ENCODE measurements at regions of chr5 and their contacts with region 1.

Region 1: GRCh38 chr5:159444441-159445082 is 114.3 kb upstream of the IL12B start:
- DNase-seq: peak; percentile 66
- H3K4me3 ChIP-seq: no peak overlapping the region
- H3K27ac ChIP-seq: no peak overlapping the region
- H3K4me1 ChIP-seq: no peaks in the 10 kb centered on the region
- H3K27me3 ChIP-seq: no peaks in the 10 kb centered on the region

Region 2: DNA sequence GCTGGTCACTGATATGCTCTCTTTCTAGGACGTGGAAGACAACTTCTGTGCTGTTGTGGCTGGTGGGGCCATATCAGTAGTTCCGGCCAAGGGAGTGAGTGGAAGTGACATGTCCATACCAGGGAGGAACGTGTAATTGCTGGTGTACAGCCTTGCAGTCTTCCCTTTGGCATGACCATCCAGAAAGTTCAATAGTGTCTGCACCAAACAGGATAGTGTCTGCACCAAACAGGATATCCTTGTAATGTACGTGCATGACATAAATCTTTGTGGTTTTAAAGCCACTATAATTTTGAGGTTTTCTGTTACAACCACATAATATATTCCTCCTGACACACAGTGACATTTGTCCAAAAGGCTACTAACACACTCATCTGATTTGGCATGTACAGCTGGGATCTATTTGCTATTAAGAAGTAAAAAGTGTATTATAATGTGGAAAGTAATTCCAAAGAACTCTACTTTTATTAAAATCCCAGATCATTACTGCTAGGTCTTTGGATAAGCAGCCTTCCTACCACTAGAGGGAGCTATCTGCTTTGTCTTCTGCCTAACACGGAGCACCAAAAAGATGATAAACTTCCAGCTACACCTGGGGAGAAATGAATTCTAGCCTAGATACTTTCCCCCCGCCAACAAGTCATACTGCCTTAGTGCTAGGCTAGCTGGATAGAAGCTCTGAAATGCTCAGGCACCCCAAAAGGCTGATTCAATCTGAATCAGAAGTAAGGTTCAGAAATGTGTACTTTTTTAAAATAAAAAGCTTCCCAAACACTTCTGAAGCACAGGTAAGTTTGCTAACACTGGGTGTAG is 287.9 kb before region 1 on chr5:
- in situ Hi-C with region 1: loop called (anchors 25 kb)
- DNase-seq: peak; percentile 82
- H3K4me3 ChIP-seq: no peak overlapping the region
- H3K27ac ChIP-seq: no peak overlapping the region
- H3K4me1 ChIP-seq: peaks cover 20% of the 10 kb centered on the region
- H3K27me3 ChIP-seq: no peaks in the 10 kb centered on the region

Region 3: DNA sequence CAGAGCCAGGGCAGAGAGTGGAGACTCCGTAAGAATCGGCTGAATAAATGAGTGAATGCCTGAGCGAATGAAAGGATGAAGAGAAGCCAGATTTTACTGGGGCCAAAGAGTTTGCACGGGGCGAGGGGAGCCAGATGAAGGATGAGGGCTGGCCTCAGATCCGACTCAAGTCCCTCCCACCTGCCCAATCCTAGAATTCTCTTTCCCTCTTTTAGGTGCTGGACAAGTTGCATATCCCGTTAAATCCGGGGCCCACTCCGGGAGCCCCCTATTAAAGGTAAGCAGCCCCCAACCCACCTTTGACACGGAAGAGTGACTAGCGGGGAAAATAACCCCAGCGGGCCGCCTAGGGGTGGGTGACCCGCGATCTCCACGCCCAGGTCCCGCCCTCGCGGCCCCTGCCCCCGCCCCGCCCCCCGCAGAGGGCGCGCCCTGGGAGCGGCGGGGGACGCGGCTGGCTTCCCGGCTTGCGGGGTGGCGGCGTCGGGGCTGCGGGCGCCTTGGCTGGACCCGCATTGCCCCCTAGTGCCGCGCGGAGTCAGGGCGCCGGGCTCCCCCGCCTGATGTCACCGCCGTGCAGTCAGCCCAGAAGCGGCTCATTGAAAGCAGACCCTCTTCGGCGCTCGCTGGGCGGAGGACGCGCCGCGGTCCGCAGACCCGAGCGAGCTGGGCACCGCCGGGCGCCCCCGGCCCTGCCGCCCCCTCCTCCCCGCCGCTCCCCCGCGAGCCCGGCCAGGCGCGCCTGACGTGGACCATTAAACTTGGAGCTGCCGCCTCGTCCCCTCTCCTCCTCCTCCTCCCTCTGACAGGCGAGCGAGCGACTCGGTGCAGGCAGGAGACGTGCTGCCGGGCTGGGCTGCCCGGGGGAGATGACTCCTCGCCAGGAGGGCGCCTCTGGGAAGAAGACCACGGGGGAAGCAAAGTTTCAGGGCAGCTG is 471.6 kb after region 1 on chr5 and contains the start of gene ADRA1B:
- in situ Hi-C with region 1: loop called (anchors 10 kb)
- DNase-seq: peak; percentile 89
- H3K4me3 ChIP-seq: peak within 1 kb of the TSS; percentile 70
- H3K27ac ChIP-seq: no peak within 1 kb of the TSS
- H3K4me1 ChIP-seq: peaks cover 26% of the 10 kb centered on the region
- H3K27me3 ChIP-seq: no peaks in the 10 kb centered on the region
- total RNA-seq, gene ADRA1B: 0.32 and 0.63 TPM in 2 replicates

Region 4: GRCh38 chr5:159965031-159965837 is 520.7 kb after region 1 on chr5:
- in situ Hi-C with region 1: loop called (anchors 10 kb)
- DNase-seq: peak; percentile 80
- H3K4me3 ChIP-seq: no peak overlapping the region
- H3K27ac ChIP-seq: no peak overlapping the region
- H3K4me1 ChIP-seq: peaks cover 8% of the 10 kb centered on the region
- H3K27me3 ChIP-seq: no peaks in the 10 kb centered on the region

Measured in GM23248 (cell line).